ENCODE measurements at regions of chr1 and their contacts with region 1.

Region 1: DNA sequence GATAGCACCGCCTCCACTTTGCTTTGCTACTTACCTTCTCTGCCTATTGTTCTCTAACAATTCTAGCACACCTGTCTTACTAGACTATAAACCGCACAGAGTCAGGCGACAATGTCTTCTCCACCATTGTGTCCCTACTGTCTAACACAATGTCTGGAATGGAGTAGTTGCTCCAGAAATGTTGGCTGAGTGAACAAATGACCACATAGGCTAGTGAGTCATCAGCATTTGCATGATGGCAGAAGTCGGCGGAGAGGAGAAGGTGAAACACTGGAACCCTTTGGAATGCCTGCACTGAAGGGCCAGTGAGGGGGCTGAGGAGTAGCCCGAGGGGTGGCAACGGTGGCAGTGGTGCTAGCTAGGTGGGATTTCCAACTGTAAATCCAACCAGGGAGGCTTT is 14.0 kb upstream of the PABPC4 start:
- DNase-seq: peak; percentile 25 to 71
- H3K4me3 ChIP-seq: no peak overlapping the region
- H3K27ac ChIP-seq: no peak overlapping the region
- H3K4me1 ChIP-seq: peaks cover 32% of the 10 kb centered on the region
- H3K27me3 ChIP-seq: no peaks in the 10 kb centered on the region
- CTCF ChIP-seq: no peak

Region 2: DNA sequence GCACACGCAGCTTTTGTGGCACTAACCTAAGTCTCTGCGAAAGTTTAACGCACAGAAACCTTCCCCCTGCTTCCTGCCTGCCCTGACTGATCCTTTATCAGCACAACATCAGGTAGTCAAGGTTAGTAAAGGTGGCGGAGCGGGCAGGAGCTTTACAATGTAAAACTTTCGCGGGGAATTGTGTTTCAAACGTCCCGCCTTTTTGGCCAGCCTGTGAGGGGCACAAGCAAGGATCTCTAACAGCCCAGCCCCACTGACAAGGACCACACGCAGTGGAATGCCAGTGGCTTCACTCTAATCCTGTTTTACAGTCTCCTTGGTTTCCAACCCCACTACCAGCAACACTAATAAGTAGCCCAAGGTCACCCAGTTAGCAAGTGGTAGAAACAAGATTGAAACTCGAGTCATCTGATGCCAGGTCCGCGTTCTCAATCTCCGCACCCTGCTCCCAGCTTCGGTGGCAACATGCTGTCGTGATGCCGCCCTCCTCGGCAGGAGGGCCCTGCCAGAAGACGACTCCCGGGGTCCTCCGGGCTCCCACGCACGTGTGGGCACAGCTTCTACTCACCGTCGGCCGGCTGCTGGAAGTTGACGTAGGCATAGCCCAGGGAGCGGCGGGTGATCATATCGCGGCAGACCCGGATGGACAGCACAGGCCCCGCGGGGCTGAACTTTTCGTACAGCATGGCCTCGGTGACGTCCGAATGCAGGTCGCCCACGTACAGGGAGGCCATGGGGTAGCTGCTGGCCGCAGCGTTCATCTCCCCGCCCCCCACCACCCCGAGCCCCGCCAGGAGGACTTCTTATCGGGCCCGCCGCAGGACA is 15.1 kb before region 1 on chr1:
- CTCF ChIA-PET with region 1: interaction called, 5 read pairs
- POLR2A ChIA-PET with region 1: interaction called, 6 read pairs
- intact Hi-C with region 1: loop called (anchors 1 kb)
- DNase-seq: peak in 1 of 2 experiments; percentile 33
- H3K4me3 ChIP-seq: peak overlapping the region; percentile 76
- H3K27ac ChIP-seq: 0 out of 2 replicates have a peak overlapping the region, but pooled peaks have one; percentile 39
- H3K4me1 ChIP-seq: peaks cover 26% of the 10 kb centered on the region
- H3K27me3 ChIP-seq: no peaks in the 10 kb centered on the region
- CTCF ChIP-seq: no peak

Region 3: DNA sequence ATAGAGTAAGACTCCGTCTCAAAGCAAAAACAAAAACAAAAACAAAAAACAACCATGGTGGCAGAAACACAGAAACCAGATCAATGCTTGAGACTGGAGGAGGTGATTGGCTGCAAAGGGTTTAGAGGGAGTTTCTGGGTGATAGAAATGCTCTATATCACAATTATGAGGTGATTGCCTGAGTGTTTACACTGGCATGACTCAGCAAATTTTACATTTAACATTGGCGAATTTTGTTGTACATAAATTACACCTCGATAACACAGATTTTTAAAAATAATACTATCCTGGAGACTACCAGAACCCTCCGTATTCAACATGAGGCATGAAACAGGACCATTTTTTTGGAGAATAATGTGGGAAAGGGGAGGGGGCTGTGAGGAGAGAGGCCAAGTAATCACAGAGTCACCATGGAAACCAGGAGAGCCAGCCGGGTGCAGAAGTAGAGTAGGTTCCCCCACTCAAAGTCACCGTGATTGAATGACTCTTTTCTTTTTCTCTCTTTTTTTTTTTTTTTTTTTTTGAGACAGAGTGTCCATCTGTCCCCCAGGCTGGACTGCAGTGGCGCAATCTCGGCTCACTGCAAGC is 24.6 kb after region 1 on chr1:
- CTCF ChIA-PET with region 1: interaction called, 17 read pairs
- POLR2A ChIA-PET with region 1: no interaction called
- intact Hi-C with region 1: no loop called
- DNase-seq: no peak
- H3K4me3 ChIP-seq: no peak overlapping the region
- H3K27ac ChIP-seq: no peak overlapping the region
- H3K4me1 ChIP-seq: peaks cover 4% of the 10 kb centered on the region; the same call in 1 of the 2 replicates
- H3K27me3 ChIP-seq: no peaks in the 10 kb centered on the region
- CTCF ChIP-seq: no peak